ENCODE measurements at regions of chr5 and their contacts with region 1.

Region 1: DNA sequence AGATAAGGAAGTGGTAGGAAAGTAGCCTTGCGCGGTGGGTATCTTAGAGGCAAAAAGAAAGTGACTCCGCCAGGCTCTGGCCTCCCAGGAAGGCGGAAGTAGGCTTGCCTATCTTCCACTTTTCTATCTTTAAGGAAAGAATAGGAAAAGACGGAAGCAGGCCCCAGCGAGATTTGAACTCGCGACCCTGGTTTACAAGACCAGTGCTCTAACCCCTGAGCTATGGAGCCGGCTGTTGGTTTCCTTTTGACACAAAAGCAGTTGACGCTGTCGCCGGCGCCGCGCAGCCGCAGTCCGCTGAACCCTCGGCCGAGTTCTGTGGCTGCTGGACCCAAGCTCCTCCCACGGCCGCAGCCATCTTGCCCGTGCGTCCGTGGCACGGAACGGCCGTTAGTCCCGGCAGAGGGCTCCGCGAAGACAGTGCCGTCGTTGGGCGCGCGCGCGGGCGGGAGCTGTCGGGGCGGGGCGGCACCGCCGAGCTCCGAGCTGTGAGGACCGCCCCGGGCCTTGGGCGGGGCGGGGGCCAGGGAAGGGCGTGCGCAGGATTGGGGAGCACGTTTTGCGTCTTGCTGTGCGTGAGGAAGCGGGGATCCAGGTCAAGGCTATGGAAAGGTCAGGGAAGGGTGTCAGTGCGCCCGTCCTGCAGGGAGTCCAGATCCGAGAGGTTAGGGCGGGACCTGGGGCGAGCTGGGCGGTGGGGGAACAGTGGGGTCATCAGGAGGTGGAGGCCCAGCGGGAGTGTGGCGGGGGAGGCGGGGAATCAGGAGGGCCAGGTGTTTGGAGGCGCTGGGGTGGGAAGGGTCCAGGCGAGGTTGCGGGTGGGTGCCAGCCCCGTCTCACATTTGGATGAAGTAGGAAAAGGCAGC is 13.2 kb downstream of the TRIM7 start:
- DNase-seq: peak; percentile 93

Region 2: GRCh38 chr5:181167814-181168488 is 23.8 kb before region 1 on chr5:
- CTCF ChIA-PET with region 1: interaction called, 19 read pairs
- POLR2A ChIA-PET with region 1: interaction called, 12 read pairs
- DNase-seq: peak; percentile 70

Region 3: GRCh38 chr5:181173420-181174342 is 18.1 kb before region 1 on chr5:
- CTCF ChIA-PET with region 1: interaction called, 19 read pairs
- POLR2A ChIA-PET with region 1: interaction called, 12 read pairs
- DNase-seq: peak; percentile 62

Region 4: DNA sequence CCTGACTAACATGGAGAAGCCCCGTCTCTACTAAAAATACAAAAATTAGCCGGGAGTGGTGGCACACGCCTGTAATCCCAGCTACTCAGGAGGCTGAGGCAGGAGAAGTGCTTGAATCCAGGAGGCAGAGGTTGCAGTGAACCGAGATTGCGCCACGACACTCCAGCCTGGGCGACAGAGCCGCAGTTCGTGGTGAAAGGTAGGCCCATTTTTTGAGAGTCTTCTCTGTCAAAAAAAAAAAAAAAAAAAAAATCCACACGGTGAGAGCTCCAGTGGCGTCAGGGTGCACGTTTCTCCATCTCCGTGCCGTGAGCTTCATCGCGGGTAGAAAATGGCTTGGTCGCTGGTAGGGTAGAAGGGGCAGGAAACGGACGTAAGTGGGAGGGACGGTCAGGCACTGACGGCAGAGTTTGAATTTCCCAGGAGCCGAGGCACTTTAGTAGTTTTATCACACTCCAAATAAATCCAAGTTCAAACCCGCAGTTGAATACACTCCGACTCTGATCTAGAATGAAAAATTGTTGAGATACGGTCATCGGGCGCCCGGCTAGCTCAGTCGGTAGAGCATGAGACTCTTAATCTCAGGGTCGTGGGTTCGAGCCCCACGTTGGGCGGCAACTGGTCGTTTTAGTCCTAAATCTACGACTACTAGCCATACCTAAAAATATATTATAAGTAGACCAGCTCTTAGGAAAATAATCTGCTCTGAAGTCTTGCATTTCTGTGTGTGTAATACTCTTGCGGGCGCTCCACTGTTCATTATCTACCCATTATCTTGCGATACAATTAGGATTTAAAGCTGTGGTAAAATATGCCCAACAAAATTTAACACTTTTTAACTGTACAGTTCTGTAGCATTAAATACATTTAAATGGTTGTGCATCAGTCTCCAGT is 15.7 kb after region 1 on chr5:
- CTCF ChIA-PET with region 1: interaction called, 7 read pairs
- POLR2A ChIA-PET with region 1: interaction called, 164 read pairs
- DNase-seq: peak; percentile 67

Region 5: GRCh38 chr5:181223058-181223728 is 31.4 kb after region 1 on chr5 and contains the start of gene TRIM41:
- CTCF ChIA-PET with region 1: interaction called, 6 read pairs
- POLR2A ChIA-PET with region 1: interaction called, 17 read pairs
- DNase-seq: peak; percentile 88

Region 6: DNA sequence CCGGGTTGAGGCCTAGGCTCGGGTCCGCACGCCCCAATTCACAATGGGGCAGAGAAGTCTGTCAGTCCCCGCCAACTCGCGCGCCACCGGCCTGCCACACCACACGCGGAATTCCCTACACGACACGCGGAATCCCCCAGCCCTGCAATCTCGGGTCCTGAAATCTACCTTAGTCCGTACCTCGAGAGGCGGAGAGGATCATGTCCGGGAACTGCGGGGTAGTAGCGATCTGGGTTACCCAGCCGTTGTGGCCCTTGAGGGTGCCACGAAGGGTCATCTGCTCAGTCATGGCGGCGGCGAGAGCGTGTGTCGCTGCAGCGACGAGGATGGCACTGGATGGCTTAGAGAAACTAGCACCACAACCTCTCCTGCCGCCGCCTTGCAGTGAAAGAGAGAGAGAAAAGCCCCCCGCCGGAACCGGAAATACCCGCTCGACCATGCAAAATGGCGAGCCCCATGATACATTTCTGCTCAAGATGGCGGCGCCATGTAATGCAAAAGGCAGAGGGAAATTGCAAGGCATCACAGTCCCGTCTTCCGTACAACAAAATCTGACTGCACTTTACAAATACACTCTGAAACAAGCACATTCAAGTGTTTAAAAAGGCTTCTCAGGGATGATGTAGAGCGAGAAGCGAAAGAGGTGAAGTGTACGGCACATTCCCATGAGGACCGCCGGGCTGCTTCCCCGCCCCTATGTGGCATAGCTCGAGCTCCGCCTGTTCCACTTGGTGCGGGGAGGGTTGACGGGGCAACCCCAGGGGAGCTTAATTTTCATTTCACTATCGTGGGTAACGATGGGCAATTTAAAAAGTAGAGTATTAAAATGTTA is 52.0 kb after region 1 on chr5 and contains the start of gene RACK1:
- CTCF ChIA-PET with region 1: no interaction called
- POLR2A ChIA-PET with region 1: interaction called, 10 read pairs
- DNase-seq: peak; percentile 87

Region 7: DNA sequence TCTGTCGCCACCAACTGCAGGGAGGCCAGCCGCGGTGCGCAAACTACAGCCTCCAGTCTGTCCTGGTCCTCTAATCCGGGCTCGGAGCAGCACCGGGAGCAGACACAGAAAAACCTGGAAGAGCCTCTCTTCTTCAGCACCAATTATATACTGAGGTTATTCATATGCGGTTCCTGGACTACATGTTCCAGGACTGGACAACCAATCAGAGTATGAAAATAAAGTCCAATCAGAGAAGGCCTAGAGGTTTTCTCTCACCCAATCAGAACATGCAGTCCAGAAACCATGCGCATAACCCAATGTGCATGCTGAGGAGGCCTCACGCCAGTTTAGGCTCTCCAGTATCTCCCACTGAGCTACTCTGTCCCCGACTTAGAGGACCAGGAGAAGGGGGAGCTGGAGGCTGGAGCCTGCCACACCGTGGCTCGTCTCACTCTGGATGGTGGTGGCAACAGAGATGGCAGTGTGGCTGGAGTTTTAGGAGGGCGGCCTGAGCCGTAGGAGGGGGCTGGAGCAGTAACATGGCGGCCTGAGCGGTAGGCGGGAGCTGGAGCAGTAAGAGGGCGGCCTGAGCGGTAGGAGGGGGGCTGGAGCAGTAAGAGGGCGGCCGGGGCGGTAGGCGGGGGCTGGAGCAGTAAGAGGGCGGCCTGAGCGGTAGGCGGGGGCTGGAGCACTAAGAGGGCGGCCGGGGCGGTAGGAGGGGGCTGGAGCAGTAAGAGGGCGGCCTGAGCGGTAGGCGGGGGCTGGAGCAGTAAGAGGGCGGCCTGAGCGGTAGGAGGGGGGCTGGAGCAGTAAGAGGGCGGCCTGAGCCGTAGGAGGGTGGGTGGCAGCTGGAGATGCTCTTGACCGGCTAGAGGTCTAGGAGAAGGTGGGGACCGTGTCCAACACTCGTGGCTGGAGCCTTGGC is 89.6 kb after region 1 on chr5:
- CTCF ChIA-PET with region 1: no interaction called
- POLR2A ChIA-PET with region 1: no interaction called
- DNase-seq: no peak